ENCODE measurements at regions of chr22 and their contacts with region 1.

Region 1: GRCh38 chr22:38554281-38554680 is 15.7 kb downstream of the DMC1 start:
- DNase-seq: no peak
- H3K4me3 ChIP-seq: no peak overlapping the region
- H3K4me3 Mint-ChIP-seq: peak overlapping the region in 1 of 2 donors; percentile 67
- H3K27ac ChIP-seq: no peak overlapping the region
- H3K27ac Mint-ChIP-seq: no peak overlapping the region
- H3K4me1 ChIP-seq: peaks cover 14 to 15% of the 10 kb centered on the region in 2 donors
- H3K4me1 Mint-ChIP-seq: peaks cover 11% of the 10 kb centered on the region
- H3K27me3 ChIP-seq: peaks cover 63 to 86% of the 10 kb centered on the region in 2 donors
- H3K27me3 Mint-ChIP-seq: peaks cover 73 to 79% (median 76%) of the 10 kb centered on the region in 3 donors
- CTCF ChIP-seq: no peak

Region 2: GRCh38 chr22:38506118-38506962 is 47.9 kb before region 1 on chr22 and contains the start of gene DDX17:
- intact Hi-C with region 1: loop called (anchors 5 kb)
- DNase-seq: peak; percentile 98 to 99 (median 99)
- H3K4me3 ChIP-seq: peak within 1 kb of the TSS; percentile 84 to 95 (median 94)
- H3K4me3 Mint-ChIP-seq: peak within 1 kb of the TSS; percentile 93 to 98
- H3K27ac ChIP-seq: peak within 1 kb of the TSS; percentile 98 to 99
- H3K27ac Mint-ChIP-seq: peak within 1 kb of the TSS; percentile 99 to 100 (median 100)
- H3K4me1 ChIP-seq: peaks cover 31 to 46% of the 10 kb centered on the region in 2 donors
- H3K4me1 Mint-ChIP-seq: peaks cover 40% of the 10 kb centered on the region
- H3K27me3 ChIP-seq: peaks cover 0 to 6% of the 10 kb centered on the region in 2 donors
- H3K27me3 Mint-ChIP-seq: peaks cover 8 to 11% (median 9%) of the 10 kb centered on the region in 3 donors
- CTCF ChIP-seq: no peak
- polyA plus RNA-seq, gene DDX17: 31.4 to 434 (median 36.3) TPM

Region 3: DNA sequence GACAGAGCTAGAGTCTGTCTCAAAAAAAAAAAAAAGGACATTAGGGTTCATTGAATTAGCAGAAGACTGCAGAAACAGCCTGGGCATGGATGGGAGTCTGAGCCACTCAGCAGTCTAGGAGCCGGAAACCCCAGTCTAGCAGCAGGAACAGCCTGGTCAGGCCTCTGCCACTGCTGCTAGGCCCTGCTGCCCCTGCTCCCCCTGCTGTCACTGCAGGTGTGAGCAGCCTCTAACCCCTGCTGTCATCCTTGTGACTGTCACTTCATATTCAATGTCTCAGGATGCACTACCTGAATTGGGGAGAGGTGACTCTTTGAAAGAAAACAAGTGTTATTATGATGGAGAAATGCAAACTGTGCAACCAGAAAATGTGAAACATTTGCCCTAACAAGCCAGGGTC is 41.2 kb before region 1 on chr22:
- intact Hi-C with region 1: loop called (anchors 5 kb)
- DNase-seq: peak in 1 of 3 donors; percentile 11
- H3K4me3 ChIP-seq: no peak overlapping the region
- H3K4me3 Mint-ChIP-seq: no peak overlapping the region
- H3K27ac ChIP-seq: no peak overlapping the region
- H3K27ac Mint-ChIP-seq: no peak overlapping the region
- H3K4me1 ChIP-seq: peaks cover 7 to 8% of the 10 kb centered on the region in 2 donors
- H3K4me1 Mint-ChIP-seq: peaks cover 11% of the 10 kb centered on the region
- H3K27me3 ChIP-seq: peaks cover 7 to 24% of the 10 kb centered on the region in 2 donors
- H3K27me3 Mint-ChIP-seq: peaks cover 27 to 58% (median 31%) of the 10 kb centered on the region in 3 donors
- CTCF ChIP-seq: no peak

Region 4: DNA sequence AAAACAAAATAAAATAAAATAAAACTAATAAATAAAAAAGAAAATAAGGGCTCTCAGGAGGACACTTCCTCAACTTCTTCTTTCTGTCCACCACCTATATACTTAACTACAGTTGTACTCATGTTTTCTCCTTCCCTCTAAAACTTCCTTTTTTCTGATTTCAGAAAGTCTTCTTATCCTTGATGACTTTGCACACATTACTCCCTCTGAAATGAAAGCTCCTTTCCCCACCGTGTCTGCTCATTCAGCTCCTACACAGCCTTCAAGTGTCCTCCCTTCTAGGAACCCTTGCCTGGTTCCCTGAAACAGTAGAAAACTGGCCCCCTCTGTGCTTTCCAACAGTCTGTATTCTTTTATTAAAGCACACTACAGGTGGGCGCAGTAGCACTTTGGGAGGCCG is 29.9 kb before region 1 on chr22:
- intact Hi-C with region 1: loop called in 1 of 2 experiments (anchors 5 kb)
- DNase-seq: peak in 2 of 3 donors; percentile 29 to 52
- H3K4me3 ChIP-seq: peak overlapping the region in 1 of 3 experiments; percentile 50
- H3K4me3 Mint-ChIP-seq: peak overlapping the region in 1 of 2 donors; percentile 61
- H3K27ac ChIP-seq: no peak overlapping the region
- H3K27ac Mint-ChIP-seq: peak overlapping the region in 3 of 7 donors; percentile 6 to 44 (median 23)
- H3K4me1 ChIP-seq: peaks cover 9 to 10% of the 10 kb centered on the region in 2 donors
- H3K4me1 Mint-ChIP-seq: peaks cover 8% of the 10 kb centered on the region
- H3K27me3 ChIP-seq: peaks cover 40 to 67% of the 10 kb centered on the region in 2 donors
- H3K27me3 Mint-ChIP-seq: peaks cover 26 to 68% (median 65%) of the 10 kb centered on the region in 3 donors
- CTCF ChIP-seq: no peak

Region 5: GRCh38 chr22:38608992-38609750 is 54.9 kb after region 1 on chr22:
- intact Hi-C with region 1: no loop called
- DNase-seq: no peak
- H3K4me3 ChIP-seq: no peak overlapping the region
- H3K4me3 Mint-ChIP-seq: no peak overlapping the region
- H3K27ac ChIP-seq: no peak overlapping the region
- H3K27ac Mint-ChIP-seq: no peak overlapping the region
- H3K4me1 ChIP-seq: no peaks in the 10 kb centered on the region
- H3K4me1 Mint-ChIP-seq: no peaks in the 10 kb centered on the region
- H3K27me3 ChIP-seq: no peaks in the 10 kb centered on the region
- H3K27me3 Mint-ChIP-seq: peaks cover 0 to 5% (median 1%) of the 10 kb centered on the region in 3 donors
- CTCF ChIP-seq: no peak

Region 6: DNA sequence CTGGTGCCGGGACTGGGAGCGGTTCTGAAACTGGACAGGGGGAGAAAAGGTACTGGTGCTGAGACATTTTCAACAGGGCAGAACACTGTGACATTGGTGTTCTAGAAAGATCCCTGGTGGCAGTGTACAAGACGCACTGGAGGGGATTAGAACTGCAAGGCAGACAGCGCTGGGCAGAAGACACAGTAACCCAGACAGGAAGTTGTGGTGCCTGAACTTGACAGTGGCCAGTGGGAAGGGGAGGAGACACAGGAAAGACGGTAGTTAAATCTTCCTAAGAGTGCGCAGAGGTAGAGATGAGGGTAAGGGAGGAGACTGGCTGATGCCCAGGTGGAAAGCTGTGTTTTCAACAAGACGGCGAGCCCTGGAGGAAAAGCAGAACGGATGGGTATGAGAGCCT is 77.4 kb after region 1 on chr22:
- intact Hi-C with region 1: no loop called
- DNase-seq: peak in 1 of 3 donors; percentile 14
- H3K4me3 ChIP-seq: peak overlapping the region in 1 of 3 experiments; percentile 7
- H3K4me3 Mint-ChIP-seq: peak overlapping the region; percentile 7 to 83
- H3K27ac ChIP-seq: no peak overlapping the region
- H3K27ac Mint-ChIP-seq: peak overlapping the region in 4 of 7 donors; percentile 1 to 77 (median 14)
- H3K4me1 ChIP-seq: peaks cover 2 to 5% of the 10 kb centered on the region in 2 donors
- H3K4me1 Mint-ChIP-seq: peaks cover 10% of the 10 kb centered on the region
- H3K27me3 ChIP-seq: no peaks in the 10 kb centered on the region
- H3K27me3 Mint-ChIP-seq: peaks cover 0 to 3% (median 2%) of the 10 kb centered on the region in 3 donors
- CTCF ChIP-seq: no peak

Region 7: GRCh38 chr22:38652859-38653258 is 98.6 kb after region 1 on chr22:
- intact Hi-C with region 1: no loop called
- DNase-seq: no peak
- H3K4me3 ChIP-seq: no peak overlapping the region
- H3K4me3 Mint-ChIP-seq: no peak overlapping the region
- H3K27ac ChIP-seq: no peak overlapping the region
- H3K27ac Mint-ChIP-seq: no peak overlapping the region
- H3K4me1 ChIP-seq: peaks cover 12 to 17% of the 10 kb centered on the region in 2 donors
- H3K4me1 Mint-ChIP-seq: peaks cover 17% of the 10 kb centered on the region
- H3K27me3 ChIP-seq: no peaks in the 10 kb centered on the region
- H3K27me3 Mint-ChIP-seq: peaks cover 0 to 3% (median 0%) of the 10 kb centered on the region in 3 donors
- CTCF ChIP-seq: no peak